ENCODE measurements at regions of chr1 and their contacts with region 1.

Region 1: DNA sequence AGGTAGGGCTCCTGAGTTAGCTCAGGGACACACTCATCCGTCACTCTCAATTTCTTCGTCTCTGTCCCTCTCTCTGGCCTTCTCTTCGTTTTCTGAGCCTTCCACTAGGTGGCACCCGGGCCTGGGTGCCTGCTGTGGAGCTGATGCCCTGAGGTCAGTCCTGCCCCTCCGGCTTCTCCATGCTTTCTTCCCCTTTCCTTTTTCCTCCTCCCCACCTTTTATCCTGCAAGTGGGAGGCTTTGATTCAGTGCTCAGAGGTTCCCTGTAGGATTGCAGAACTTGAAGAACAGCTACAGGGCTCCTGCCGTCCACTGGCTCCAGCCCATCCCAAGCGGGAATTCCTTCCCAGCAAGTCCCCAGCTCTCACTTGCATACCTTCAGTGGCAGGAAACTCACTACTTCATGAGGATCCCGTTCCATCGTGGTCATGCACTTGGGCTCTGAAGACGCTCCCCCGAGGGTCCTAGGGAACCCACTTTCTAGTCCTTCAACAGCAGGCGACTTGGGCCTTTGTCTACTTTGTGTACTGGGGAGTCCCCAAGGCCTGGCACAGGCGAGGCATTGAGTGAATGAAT is 45.6 kb downstream of the SRRM1 start:
- DNase-seq: peak; percentile 79
- ATAC-seq: peak; percentile 87
- H3K4me3 ChIP-seq: no peak overlapping the region
- H3K4me3 Mint-ChIP-seq: no peak overlapping the region
- H3K27ac ChIP-seq: no peak overlapping the region
- H3K27ac Mint-ChIP-seq: peak overlapping the region; percentile 0
- H3K4me1 ChIP-seq: peaks cover 1 to 9% of the 10 kb centered on the region in 2 donors
- H3K4me1 Mint-ChIP-seq: peaks cover 8% of the 10 kb centered on the region
- H3K27me3 ChIP-seq: no peaks in the 10 kb centered on the region
- H3K27me3 Mint-ChIP-seq: no peaks in the 10 kb centered on the region
- CTCF ChIP-seq: peak; percentile 87

Region 2: DNA sequence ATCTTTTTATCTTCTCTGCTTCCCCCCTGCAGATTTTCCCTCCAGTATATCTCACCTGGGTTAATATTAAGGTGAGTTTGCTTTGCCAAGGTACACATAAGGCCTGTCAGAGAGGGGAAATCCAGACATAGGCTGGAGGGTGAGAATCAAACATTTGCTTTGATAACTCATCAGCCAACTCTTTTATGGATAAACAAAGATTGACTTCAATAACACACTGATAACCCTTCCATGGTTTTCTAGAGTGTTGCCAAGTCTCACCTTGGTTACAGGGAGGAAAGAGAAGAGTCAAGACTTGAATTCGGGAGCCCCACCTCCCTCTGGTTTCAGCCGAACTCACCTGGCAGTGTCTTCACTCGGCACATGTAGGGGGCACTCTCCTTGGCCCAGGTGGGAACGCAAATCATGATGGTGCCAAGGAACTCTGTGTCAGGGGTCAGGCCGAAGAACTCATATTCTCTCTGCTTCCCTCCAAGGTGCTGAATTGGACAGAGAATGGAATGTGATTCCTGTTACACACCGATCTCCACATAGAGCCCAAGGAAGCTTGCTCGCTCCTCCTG is 560.8 kb before region 1 on chr1:
- CTCF ChIA-PET with region 1: no interaction called
- POLR2A ChIA-PET with region 1: no interaction called
- intact Hi-C with region 1: no loop called
- DNase-seq: no peak
- ATAC-seq: no peak
- H3K4me3 ChIP-seq: no peak overlapping the region
- H3K4me3 Mint-ChIP-seq: no peak overlapping the region
- H3K27ac ChIP-seq: no peak overlapping the region
- H3K27ac Mint-ChIP-seq: no peak overlapping the region
- H3K4me1 ChIP-seq: no peaks in the 10 kb centered on the region
- H3K4me1 Mint-ChIP-seq: no peaks in the 10 kb centered on the region
- H3K27me3 ChIP-seq: no peaks in the 10 kb centered on the region
- H3K27me3 Mint-ChIP-seq: peaks cover 21% of the 10 kb centered on the region
- CTCF ChIP-seq: no peak

Region 3: GRCh38 chr1:24699628-24700027 is 10.9 kb after region 1 on chr1:
- CTCF ChIA-PET with region 1: interaction called, 46 read pairs
- POLR2A ChIA-PET with region 1: no interaction called
- intact Hi-C with region 1: no loop called
- DNase-seq: no peak
- ATAC-seq: no peak
- H3K4me3 ChIP-seq: no peak overlapping the region
- H3K4me3 Mint-ChIP-seq: no peak overlapping the region
- H3K27ac ChIP-seq: no peak overlapping the region
- H3K27ac Mint-ChIP-seq: no peak overlapping the region
- H3K4me1 ChIP-seq: peaks cover 19 to 20% of the 10 kb centered on the region in 2 donors
- H3K4me1 Mint-ChIP-seq: peaks cover 24% of the 10 kb centered on the region
- H3K27me3 ChIP-seq: no peaks in the 10 kb centered on the region
- H3K27me3 Mint-ChIP-seq: no peaks in the 10 kb centered on the region
- CTCF ChIP-seq: no peak

Region 4: GRCh38 chr1:24735509-24736375 is 47.0 kb after region 1 on chr1:
- CTCF ChIA-PET with region 1: interaction called, 22 read pairs
- POLR2A ChIA-PET with region 1: no interaction called
- intact Hi-C with region 1: no loop called
- DNase-seq: peak; percentile 20
- ATAC-seq: no peak
- H3K4me3 ChIP-seq: no peak overlapping the region
- H3K4me3 Mint-ChIP-seq: peak overlapping the region; percentile 68
- H3K27ac ChIP-seq: peak overlapping the region in 1 of 2 donors; percentile 32
- H3K27ac Mint-ChIP-seq: peak overlapping the region; percentile 83
- H3K4me1 ChIP-seq: peaks cover 42 to 70% of the 10 kb centered on the region in 2 donors
- H3K4me1 Mint-ChIP-seq: peaks cover 48% of the 10 kb centered on the region
- H3K27me3 ChIP-seq: no peaks in the 10 kb centered on the region
- H3K27me3 Mint-ChIP-seq: no peaks in the 10 kb centered on the region
- CTCF ChIP-seq: no peak

Region 5: DNA sequence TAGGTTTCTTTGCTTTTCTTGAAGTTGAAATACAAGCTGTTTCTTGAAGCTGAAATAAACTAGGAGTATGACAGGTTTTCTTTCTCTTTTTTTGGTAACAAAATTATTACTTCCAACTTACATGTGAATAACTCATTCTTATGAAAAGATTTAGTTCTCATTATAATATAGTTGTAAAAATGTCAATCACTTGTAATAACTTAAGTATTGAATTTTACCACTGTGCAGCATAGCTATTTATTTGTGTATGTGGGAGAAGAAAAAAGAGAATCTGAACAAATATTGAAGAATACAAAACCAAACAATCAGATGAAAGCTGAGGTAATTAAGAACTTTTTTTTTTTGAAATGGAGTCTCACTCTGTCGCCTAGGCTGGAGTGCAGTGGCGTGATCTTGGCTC is 67.7 kb after region 1 on chr1:
- CTCF ChIA-PET with region 1: interaction called, 11 read pairs
- POLR2A ChIA-PET with region 1: no interaction called
- intact Hi-C with region 1: no loop called
- DNase-seq: no peak
- ATAC-seq: no peak
- H3K4me3 ChIP-seq: no peak overlapping the region
- H3K4me3 Mint-ChIP-seq: no peak overlapping the region
- H3K27ac ChIP-seq: no peak overlapping the region
- H3K27ac Mint-ChIP-seq: no peak overlapping the region
- H3K4me1 ChIP-seq: peaks cover 33 to 38% of the 10 kb centered on the region in 2 donors
- H3K4me1 Mint-ChIP-seq: peaks cover 52% of the 10 kb centered on the region
- H3K27me3 ChIP-seq: no peaks in the 10 kb centered on the region
- H3K27me3 Mint-ChIP-seq: no peaks in the 10 kb centered on the region
- CTCF ChIP-seq: no peak

Region 6: DNA sequence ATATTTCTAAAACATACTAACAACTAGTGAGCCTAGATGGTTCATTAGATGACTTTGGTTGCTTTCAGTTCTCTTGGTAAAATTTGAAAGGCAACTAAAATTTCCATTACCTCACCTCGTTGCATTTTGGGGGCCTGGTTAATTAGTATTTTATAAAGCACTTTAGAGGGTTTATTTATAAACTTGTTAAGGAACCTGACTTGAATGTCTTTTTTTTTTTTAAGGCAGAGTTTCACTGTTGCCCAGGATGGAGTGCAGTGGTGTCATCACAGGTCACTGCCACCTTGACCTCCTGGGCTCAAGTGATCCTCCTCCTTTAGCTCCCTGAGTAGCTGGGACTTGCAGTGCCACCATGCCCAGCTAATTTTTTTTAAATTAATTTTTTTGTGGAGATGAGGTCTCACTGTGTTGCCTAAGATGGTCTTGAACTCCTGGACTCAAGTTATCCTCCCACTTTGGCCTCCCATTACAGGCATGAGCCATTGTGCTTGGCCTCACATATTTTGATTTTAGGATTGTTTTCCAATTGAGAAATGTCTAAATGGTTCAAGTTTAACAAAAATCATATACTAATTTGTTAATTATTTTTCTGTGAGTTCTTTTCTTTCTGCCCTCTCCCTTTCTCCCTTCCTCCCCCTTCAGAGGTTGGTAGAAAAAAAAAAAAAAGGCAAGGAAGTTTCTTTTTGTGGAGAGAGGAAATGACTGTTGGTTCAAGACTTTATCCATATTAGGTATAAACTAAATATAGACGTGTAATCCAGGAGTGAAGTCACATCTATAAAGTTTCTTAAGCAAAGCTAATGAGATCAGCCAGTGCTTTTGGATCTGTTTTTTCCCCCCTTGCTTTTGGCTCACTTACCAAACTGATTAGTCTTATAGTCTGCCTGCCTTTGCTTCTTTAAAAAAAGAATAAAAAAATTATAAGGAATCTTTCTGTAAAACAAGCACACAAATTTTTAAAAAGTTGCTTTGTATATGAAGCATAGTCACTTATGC is 81.2 kb after region 1 on chr1:
- CTCF ChIA-PET with region 1: interaction called, 16 read pairs
- POLR2A ChIA-PET with region 1: no interaction called
- intact Hi-C with region 1: no loop called
- DNase-seq: no peak
- ATAC-seq: peak; percentile 28
- H3K4me3 ChIP-seq: no peak overlapping the region
- H3K4me3 Mint-ChIP-seq: no peak overlapping the region
- H3K27ac ChIP-seq: peak overlapping the region in 1 of 2 donors; percentile 61
- H3K27ac Mint-ChIP-seq: no peak overlapping the region
- H3K4me1 ChIP-seq: peaks cover 17% of the 10 kb centered on the region in 2 donors
- H3K4me1 Mint-ChIP-seq: peaks cover 53% of the 10 kb centered on the region
- H3K27me3 ChIP-seq: no peaks in the 10 kb centered on the region
- H3K27me3 Mint-ChIP-seq: no peaks in the 10 kb centered on the region
- CTCF ChIP-seq: no peak

Region 7: DNA sequence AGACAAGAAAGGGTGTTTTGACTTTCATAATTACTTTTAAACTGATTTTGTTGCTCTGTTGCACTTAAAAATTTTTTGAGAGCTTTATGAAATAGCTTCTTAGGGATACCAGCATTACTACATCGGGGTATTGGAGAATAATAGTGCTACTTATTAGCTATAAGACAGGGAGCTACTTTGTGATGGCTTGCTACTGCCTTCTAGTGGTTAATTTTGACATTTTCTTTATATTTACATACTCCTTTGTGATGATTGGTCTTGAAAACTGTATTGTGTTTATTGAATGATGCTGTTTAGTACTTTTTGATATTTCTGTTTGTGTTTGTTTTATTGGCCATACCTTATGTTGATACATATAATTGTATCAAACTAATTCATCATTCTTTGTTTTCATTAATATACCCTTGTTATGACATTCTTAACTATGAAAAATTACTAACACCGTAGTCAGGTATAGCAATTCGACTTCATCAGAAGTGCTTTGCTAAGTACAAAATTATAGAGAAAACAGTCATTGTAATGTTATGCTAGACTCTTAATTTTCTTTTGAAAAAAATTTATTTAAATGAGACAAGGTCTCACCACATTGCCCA is 142.1 kb after region 1 on chr1:
- CTCF ChIA-PET with region 1: interaction called, 579 read pairs
- POLR2A ChIA-PET with region 1: interaction called, 3 read pairs
- intact Hi-C with region 1: loop called (anchors 2 kb)
- DNase-seq: peak; percentile 78
- ATAC-seq: peak; percentile 82
- H3K4me3 ChIP-seq: no peak overlapping the region
- H3K4me3 Mint-ChIP-seq: no peak overlapping the region
- H3K27ac ChIP-seq: no peak overlapping the region
- H3K27ac Mint-ChIP-seq: no peak overlapping the region
- H3K4me1 ChIP-seq: peaks cover 13 to 24% of the 10 kb centered on the region in 2 donors
- H3K4me1 Mint-ChIP-seq: peaks cover 51% of the 10 kb centered on the region
- H3K27me3 ChIP-seq: no peaks in the 10 kb centered on the region
- H3K27me3 Mint-ChIP-seq: no peaks in the 10 kb centered on the region
- CTCF ChIP-seq: peak; percentile 98